BJ (cell line): ENCODE measurements at regions of chr9 and their contacts with region 1.

Region 1: DNA sequence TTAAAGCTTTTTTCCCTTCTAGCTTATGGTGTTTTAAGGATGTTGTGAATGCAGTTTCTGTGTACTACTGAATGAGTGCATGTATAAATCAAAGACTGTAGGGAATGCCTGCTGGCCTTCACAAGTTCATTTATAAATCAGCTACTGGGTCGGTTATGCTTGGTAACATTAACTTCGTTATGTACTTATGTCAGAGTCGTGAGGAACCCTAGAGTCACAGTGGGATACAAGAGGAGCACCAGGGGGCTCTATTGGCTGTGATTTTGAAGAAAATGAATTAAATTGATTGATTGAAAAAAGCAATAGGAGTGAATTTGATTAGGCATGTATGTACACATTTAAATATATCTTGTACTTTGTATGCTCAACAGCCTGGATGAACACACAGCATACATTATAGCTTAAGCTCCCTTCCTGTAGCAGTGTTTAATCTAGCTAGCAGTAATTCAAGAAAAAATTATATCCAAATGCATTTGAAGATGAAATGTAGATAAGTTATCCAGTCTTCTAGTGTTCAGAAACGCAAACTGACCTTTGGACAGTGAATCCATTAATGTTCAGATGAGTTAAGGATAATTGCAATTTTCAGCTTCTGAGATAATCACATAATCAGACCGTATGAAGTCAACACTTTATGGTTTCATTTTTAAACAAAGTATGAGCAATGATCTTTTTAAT is 204.2 kb downstream of the KDM4C start:
- DNase-seq: no peak
- H3K4me3 ChIP-seq: no peak overlapping the region
- H3K27me3 ChIP-seq: no peaks in the 10 kb centered on the region
- CTCF ChIP-seq: no peak

Region 2: GRCh38 chr9:6855860-6856259 is 106.1 kb before region 1 on chr9:
- CTCF ChIA-PET with region 1: no interaction called
- POLR2A ChIA-PET with region 1: interaction called, 18 read pairs
- DNase-seq: no peak
- H3K4me3 ChIP-seq: no peak overlapping the region
- H3K27me3 ChIP-seq: no peaks in the 10 kb centered on the region
- CTCF ChIP-seq: no peak